Naive thymus-derived CD4-positive, alpha-beta T cell (primary cell): ENCODE measurements at regions of chr14 and their contacts with region 1.

Region 1: DNA sequence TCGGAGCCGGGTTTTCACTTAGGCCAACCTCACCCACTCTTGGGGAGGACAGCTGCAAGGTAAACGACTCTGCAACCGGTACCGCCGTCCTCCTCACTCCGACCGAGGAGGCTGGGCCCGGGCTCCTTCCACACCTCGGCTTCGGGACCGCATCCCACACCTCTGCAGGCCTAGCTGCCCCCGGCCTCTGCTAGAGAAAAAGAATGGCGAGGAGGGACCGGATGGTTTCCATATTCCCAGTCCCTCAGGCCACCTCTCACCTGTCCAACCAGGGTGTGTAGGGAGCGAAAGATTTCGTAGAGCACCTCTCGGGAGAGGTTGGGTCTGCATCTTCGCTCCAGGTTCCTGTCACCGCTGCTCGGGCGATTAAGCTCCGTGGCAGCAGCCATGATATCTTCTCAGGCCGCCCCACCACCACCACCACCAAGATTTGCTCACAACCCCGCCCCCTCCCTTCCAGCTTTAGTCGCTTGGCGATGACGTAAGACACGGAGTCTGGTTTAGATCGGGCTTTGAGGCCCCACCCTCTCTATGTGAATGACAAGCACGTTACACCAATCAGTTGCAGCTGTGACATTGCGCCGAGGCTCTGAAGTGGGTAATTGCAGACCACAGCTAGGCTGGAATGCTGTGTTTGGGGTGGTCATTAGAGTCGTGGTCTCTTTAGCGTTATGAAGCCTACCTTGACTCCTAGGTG is at the start of gene MBIP:
- DNase-seq: peak; percentile 65 to 96 (median 85)
- ATAC-seq: peak; percentile 99
- H3K4me3 ChIP-seq: peak within 1 kb of the TSS; percentile 97
- H3K4me3 Mint-ChIP-seq: peak within 1 kb of the TSS; percentile 88 to 99 (median 98)
- H3K27ac ChIP-seq: peak within 1 kb of the TSS; percentile 81
- H3K27ac Mint-ChIP-seq: peak within 1 kb of the TSS; percentile 90 to 97 (median 95)
- H3K4me1 ChIP-seq: peaks cover 4 to 12% of the 10 kb centered on the region in 2 donors
- H3K4me1 Mint-ChIP-seq: peaks cover 16 to 52% (median 46%) of the 10 kb centered on the region in 7 donors
- H3K27me3 ChIP-seq: no peaks in the 10 kb centered on the region
- H3K27me3 Mint-ChIP-seq: peaks cover 6 to 25% (median 10%) of the 10 kb centered on the region in 5 donors
- total RNA-seq, gene MBIP: 22.5 to 42.7 (median 24.6) TPM

Region 2: GRCh38 chr14:35932659-35933322 is 387.6 kb before region 1 on chr14:
- CTCF ChIA-PET with region 1: no interaction called
- POLR2A ChIA-PET with region 1: no interaction called
- intact Hi-C with region 1: loop called in 1 of 2 experiments (anchors 2 kb)
- DNase-seq: peak in 8 of 9 donors; percentile 22 to 71 (median 66)
- ATAC-seq: peak; percentile 76
- H3K4me3 ChIP-seq: peak overlapping the region; percentile 63
- H3K4me3 Mint-ChIP-seq: peak overlapping the region; percentile 80 to 94 (median 90)
- H3K27ac ChIP-seq: peak overlapping the region; percentile 57
- H3K27ac Mint-ChIP-seq: peak overlapping the region; percentile 77 to 96 (median 90)
- H3K4me1 ChIP-seq: peaks cover 0 to 10% of the 10 kb centered on the region in 2 donors
- H3K4me1 Mint-ChIP-seq: peaks cover 6 to 50% (median 30%) of the 10 kb centered on the region in 7 donors
- H3K27me3 ChIP-seq: no peaks in the 10 kb centered on the region
- H3K27me3 Mint-ChIP-seq: peaks cover 0 to 24% (median 0%) of the 10 kb centered on the region in 5 donors

Region 3: GRCh38 chr14:36373982-36374673 is 53.8 kb after region 1 on chr14:
- CTCF ChIA-PET with region 1: no interaction called
- POLR2A ChIA-PET with region 1: no interaction called
- intact Hi-C with region 1: loop called in 1 of 2 experiments (anchors 2 kb)
- DNase-seq: peak; percentile 33 to 66 (median 57)
- ATAC-seq: peak; percentile 92
- H3K4me3 ChIP-seq: no peak overlapping the region
- H3K4me3 Mint-ChIP-seq: no peak overlapping the region
- H3K27ac ChIP-seq: no peak overlapping the region
- H3K27ac Mint-ChIP-seq: no peak overlapping the region
- H3K4me1 ChIP-seq: no peaks in the 10 kb centered on the region
- H3K4me1 Mint-ChIP-seq: peaks cover 0 to 3% (median 0%) of the 10 kb centered on the region in 7 donors
- H3K27me3 ChIP-seq: no peaks in the 10 kb centered on the region
- H3K27me3 Mint-ChIP-seq: peaks cover 0 to 7% (median 2%) of the 10 kb centered on the region in 5 donors